ENCODE measurements at regions of chr11 and their contacts with region 1.

Region 1: DNA sequence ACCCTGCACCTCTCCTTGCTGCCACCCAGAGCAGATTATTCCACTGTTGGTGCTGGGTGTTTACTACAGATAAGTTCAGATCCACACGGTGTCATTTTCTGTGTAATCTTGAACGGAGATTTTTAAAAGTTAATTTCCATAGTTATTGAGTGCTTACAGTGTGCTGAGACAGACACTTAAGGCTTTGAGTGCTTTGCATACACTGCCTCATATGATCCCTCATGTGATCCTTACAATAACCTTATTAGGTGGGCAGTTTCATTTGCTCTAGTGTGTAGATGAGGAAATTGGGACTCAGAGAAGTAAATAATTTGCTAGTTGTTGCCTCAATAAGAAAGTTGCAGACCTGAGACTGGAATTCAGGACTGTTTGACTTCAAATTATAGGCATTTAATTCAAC is 32.3 kb upstream of the ME3 start:
- DNase-seq: no peak
- ATAC-seq: no peak

Region 2: GRCh38 chr11:86081455-86081854 is 623.3 kb before region 1 on chr11:
- intact Hi-C with region 1: no loop called
- DNase-seq: no peak
- ATAC-seq: no peak

Region 3: DNA sequence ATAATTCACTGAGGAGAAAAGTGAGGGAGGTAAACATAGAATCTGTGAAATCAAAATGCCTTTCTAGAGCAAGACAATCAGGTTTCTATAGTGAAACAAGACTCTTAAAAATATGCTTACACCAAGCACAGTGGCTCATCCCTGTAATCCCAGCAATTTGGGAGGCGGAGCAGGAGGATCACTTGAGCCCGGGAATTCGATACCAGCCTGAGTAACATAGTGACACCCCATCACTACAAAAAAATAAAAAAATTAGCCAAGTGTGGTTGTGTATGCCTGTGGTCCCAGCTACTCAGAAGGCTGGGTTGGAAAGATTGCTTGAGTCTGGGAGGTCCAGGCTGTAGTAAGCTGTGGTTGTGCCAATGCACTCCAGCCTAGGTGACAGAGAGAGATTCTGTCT is 10.9 kb after region 1 on chr11:
- intact Hi-C with region 1: loop called (anchors 1 kb)
- DNase-seq: no peak
- ATAC-seq: no peak